ENCODE measurements at regions of chr22 and their contacts with region 1.

Region 1: GRCh38 chr22:37566903-37567820 is 6.9 kb downstream of the CDC42EP1 start:
- DNase-seq: peak in 3 of 4 experiments; percentile 44 to 74 (median 66)
- ATAC-seq: peak; percentile 49
- H3K4me3 ChIP-seq: no peak overlapping the region
- H3K27ac ChIP-seq: no peak overlapping the region
- H3K4me1 ChIP-seq: peaks cover 25 to 49% of the 10 kb centered on the region in 2 experiments
- H3K27me3 ChIP-seq: no peaks in the 10 kb centered on the region
- CTCF ChIP-seq: peak; percentile 74 to 86 (median 75)
- EP300 ChIP-seq: no peak
- POLR2A ChIP-seq: 0 out of 2 replicates have a peak, but pooled peaks have one; percentile 20
- RAD21 ChIP-seq: peak; percentile 57 to 69

Region 2: GRCh38 chr22:37581504-37581903 is 14.3 kb after region 1 on chr22:
- CTCF ChIA-PET with region 1: no interaction called
- POLR2A ChIA-PET with region 1: interaction called, 17 read pairs
- in situ Hi-C with region 1: no loop called
- intact Hi-C with region 1: no loop called
- DNase-seq: no peak
- ATAC-seq: no peak
- H3K4me3 ChIP-seq: no peak overlapping the region
- H3K27ac ChIP-seq: no peak overlapping the region
- H3K4me1 ChIP-seq: peaks cover 0 to 13% of the 10 kb centered on the region in 2 experiments; a peak in 3 of 5 replicates
- H3K27me3 ChIP-seq: peaks cover 0 to 5% of the 10 kb centered on the region in 2 experiments; a peak in 1 of 5 replicates
- CTCF ChIP-seq: no peak
- EP300 ChIP-seq: no peak
- POLR2A ChIP-seq: no peak
- RAD21 ChIP-seq: no peak

Region 3: DNA sequence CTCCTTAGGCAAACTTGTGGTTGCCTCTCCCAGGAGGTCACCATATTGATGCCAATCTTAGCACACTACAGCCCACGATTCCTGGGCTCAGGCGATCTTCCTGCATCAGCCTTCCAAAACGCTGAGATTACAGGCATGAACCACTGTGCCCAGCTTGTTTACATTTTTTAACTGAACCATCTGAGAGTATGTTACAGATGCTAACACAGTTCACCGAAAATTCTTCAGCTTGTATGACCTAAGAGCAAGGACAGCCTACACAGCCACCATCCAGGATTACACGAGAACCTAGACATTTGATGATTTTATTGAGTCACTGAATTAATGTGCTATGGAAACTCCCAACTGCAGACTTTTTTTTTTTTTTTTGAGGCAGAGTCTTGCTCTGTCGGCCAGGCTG is 102.4 kb after region 1 on chr22:
- CTCF ChIA-PET with region 1: no interaction called
- POLR2A ChIA-PET with region 1: no interaction called
- in situ Hi-C with region 1: no loop called
- intact Hi-C with region 1: no loop called
- DNase-seq: no peak
- ATAC-seq: no peak
- H3K4me3 ChIP-seq: no peak overlapping the region
- H3K27ac ChIP-seq: no peak overlapping the region
- H3K4me1 ChIP-seq: peaks cover 0 to 32% of the 10 kb centered on the region in 2 experiments; a peak in 3 of 5 replicates
- H3K27me3 ChIP-seq: no peaks in the 10 kb centered on the region
- CTCF ChIP-seq: no peak
- EP300 ChIP-seq: no peak
- POLR2A ChIP-seq: no peak
- RAD21 ChIP-seq: no peak

Region 4: GRCh38 chr22:37953437-37954179 is 386.4 kb after region 1 on chr22 and contains the starts of genes C22orf23 and POLR2F:
- CTCF ChIA-PET with region 1: no interaction called
- POLR2A ChIA-PET with region 1: no interaction called
- in situ Hi-C with region 1: no loop called
- intact Hi-C with region 1: no loop called
- DNase-seq: peak; percentile 92 to 95 (median 94)
- ATAC-seq: peak; percentile 92
- H3K4me3 ChIP-seq: peak within 1 kb of the TSS; percentile 82
- H3K27ac ChIP-seq: peak within 1 kb of the TSS; percentile 82
- H3K4me1 ChIP-seq: peaks cover 7 to 20% of the 10 kb centered on the region in 2 experiments; a peak in 3 of 5 replicates
- H3K27me3 ChIP-seq: no peaks in the 10 kb centered on the region
- CTCF ChIP-seq: 0 out of 6 replicates have a peak, but pooled peaks of 1 of the 3 experiments have one; percentile 10
- EP300 ChIP-seq: no peak
- POLR2A ChIP-seq: peak; percentile 87
- RAD21 ChIP-seq: no peak
- polyA plus RNA-seq, gene C22orf23: 0.53 to 0.91 TPM
- polyA plus RNA-seq, gene POLR2F: 187 to 195 TPM